ENCODE measurements at regions of chr7 and their contacts with region 1.

Region 1: DNA sequence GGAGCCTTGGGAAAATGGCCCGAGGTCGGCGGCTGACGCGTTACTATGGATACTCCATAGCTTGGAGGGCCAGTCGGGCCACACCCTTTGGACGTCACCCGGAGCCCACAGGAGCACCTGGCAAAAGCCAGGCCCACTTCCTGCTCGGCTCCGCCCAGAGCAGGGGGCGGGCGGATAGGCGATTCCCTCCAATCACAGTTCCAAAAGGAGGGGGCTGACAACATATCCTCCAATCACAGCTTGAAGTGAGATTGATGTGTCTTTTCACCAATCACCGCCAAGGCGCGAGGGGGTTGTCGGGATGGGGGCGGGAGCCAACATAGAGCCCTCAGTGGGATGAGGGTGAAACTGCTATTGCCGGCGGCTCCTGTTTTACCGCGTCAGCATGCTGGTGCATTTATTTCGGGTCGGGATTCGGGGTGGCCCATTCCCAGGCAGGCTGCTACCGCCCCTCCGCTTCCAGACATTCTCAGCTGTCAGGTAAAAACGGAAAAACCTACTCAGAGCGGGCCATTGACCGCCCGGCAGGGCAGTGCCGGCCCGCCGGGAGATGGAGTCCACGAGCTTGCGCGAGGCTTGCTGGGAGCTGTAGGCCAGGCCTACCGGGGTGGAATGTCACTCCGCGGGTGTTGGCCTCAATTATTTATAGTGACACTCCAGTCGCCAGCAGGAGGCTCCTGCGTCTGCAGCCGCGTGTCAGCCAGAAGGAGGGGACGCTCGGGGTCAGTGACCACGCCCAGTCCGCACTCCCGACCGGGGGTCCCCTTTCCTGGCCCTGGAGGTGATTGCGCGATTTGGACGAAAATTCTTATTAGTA is at the start of gene ABCB8:
- DNase-seq: peak; percentile 98
- total RNA-seq, gene ABCB8: 28.5 TPM

Region 2: DNA sequence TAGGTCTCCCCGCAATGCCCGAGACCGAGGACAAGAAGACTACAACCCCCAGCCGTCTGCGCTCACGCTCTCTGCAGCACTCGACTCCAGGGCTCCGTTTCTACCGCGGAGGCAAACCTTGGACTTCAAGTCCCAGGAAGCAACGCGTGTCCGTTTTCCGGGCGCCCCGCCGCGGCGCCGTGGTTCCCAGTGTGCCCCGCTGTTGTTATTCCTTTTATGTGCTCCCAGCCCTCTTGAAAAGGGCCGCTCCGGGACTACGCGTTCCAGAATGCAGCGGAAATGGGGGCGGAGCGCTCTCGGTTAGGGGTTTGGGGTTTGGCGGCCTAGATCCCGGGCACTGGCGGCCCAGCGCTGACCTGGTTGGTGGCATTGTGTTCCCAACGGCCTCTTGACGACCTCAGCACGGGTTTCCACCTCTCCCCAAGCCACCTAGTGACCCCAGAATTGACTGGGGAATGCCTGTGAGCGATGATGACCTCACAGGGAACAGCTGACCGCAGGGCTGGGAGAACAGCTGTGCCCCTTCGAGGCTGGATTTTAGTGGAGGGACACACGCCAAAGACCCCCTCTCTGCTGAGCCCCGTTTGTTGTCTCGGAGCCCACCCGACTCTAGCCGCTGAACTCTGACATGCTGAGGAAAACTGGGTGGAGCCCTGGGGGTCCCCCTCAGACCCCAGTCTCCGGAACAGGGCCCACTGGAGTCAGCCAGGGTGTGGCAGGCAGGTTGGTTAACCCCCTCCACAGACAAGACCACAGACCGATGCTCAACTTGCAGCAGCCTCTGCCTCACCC is 29.8 kb after region 1 on chr7:
- intact Hi-C with region 1: loop called (anchors 2 kb)
- DNase-seq: peak; percentile 99

Region 3: DNA sequence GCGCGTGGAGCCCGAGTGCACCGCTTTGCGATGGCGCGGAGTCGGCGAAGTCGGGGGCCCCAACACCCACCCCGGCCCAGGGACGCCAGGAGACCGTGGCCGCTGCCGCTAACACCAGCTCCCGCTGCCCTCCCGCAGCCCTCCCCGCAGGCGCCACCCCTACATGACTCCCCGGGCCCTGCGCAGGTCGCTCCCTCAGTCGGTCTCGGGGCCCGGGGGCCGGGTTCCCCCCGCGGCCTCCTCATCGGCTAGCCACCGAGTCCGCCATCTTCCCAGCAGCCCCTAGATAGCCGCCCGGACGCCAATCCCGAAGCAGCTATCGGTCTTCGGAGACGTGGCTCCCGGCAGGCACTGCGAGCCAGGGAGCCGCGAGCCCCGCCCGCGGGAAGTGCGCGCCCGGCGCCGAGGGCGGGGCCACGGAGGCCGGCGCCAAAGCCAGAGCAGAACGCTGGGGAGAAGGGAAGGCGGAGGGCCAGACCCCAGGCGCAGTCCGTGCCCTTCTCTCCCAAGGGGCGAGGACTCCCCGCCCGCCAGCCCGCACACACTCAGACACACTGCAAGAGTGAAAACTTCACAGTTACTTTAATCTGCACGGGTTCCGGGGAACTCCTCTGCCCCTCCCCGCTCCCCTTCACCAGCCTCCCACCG is 52.3 kb after region 1 on chr7 and contains the start of gene FASTK:
- intact Hi-C with region 1: loop called (anchors 1 kb)
- DNase-seq: peak; percentile 97
- total RNA-seq, gene FASTK: 93.3 TPM

Region 4: GRCh38 chr7:151110941-151111645 is 82.8 kb after region 1 on chr7:
- intact Hi-C with region 1: loop called (anchors 5 kb)
- DNase-seq: peak; percentile 89